ENCODE measurements at regions of chr7 and their contacts with region 1.

Region 1: DNA sequence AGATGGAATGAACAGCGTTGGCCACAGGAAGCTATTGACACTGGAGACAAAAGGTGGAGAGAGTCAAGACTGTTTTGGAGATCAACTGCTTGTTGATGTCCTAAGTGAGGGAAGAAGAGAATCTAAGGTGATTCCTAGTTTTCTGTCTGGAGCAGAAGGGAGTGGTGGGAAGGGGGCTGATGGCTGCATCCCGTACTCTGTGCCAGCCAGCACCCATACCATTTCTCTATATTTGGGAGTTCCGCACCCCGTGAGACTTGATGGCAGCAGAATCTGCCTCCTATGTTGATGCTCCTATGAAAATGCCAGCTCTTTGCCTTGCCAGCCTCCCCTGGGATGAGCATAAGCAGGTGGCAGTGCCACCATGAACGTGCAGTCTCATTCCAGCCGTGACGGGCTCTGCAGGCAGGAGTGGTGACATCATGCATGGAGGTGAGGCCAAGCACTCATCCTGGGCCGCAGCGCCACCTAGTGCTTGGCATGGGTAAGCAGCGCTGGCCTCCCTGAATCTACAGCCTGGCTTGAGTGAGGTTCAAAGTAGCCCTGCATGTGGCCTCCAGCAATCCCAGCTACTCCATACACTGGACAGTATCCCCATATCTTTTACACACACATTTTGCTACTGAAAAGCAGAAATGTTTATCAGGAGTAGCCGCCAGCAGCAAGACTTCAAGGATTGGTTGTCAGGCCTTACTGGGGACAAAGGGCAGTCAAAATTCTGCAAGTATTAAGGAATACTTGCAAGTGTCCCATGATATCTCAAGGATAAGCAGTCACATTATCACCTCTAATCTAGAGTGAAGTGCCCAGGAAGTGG is 43.0 kb downstream of the PODXL start:
- DNase-seq: peak; percentile 63 to 86 (median 69)
- ATAC-seq: peak; percentile 99
- H3K4me3 ChIP-seq: no peak overlapping the region
- H3K4me3 Mint-ChIP-seq: peak overlapping the region; percentile 26
- H3K27ac ChIP-seq: no peak overlapping the region
- H3K27ac Mint-ChIP-seq: no peak overlapping the region
- H3K4me1 ChIP-seq: peaks cover 17% of the 10 kb centered on the region
- H3K4me1 Mint-ChIP-seq: peaks cover 21% of the 10 kb centered on the region
- H3K27me3 ChIP-seq: no peaks in the 10 kb centered on the region
- H3K27me3 Mint-ChIP-seq: peaks cover 23% of the 10 kb centered on the region
- CTCF ChIP-seq: peak; percentile 89

Region 2: GRCh38 chr7:130875265-130875741 is 638.1 kb before region 1 on chr7:
- CTCF ChIA-PET with region 1: no interaction called
- POLR2A ChIA-PET with region 1: no interaction called
- intact Hi-C with region 1: loop called in 1 of 2 experiments (anchors 5 kb)
- DNase-seq: peak in 13 of 14 experiments; percentile 22 to 69 (median 41)
- ATAC-seq: peak; percentile 84
- H3K4me3 ChIP-seq: no peak overlapping the region
- H3K4me3 Mint-ChIP-seq: no peak overlapping the region
- H3K27ac ChIP-seq: no peak overlapping the region
- H3K27ac Mint-ChIP-seq: no peak overlapping the region
- H3K4me1 ChIP-seq: no peaks in the 10 kb centered on the region
- H3K4me1 Mint-ChIP-seq: peaks cover 29% of the 10 kb centered on the region
- H3K27me3 ChIP-seq: no peaks in the 10 kb centered on the region
- H3K27me3 Mint-ChIP-seq: no peaks in the 10 kb centered on the region
- CTCF ChIP-seq: peak; percentile 68

Region 3: DNA sequence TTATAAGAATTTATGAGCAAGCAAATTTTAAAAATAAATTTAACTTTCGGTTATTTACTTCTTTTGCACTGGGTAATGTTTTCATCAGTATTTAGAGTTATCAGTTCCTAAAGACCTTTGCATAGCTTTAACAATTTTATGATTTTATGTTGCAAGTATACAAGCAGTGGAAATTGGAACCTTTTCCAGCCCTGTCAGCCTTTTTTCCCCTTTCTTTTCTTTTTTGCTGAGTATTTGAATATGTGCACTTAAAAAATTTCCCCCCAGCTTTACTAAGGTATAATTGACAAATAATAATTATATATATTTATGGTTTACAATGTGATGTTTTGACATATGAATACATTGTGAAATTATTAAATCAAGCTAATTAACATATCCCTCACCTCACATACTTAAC is 123.2 kb before region 1 on chr7:
- CTCF ChIA-PET with region 1: no interaction called
- POLR2A ChIA-PET with region 1: no interaction called
- intact Hi-C with region 1: no loop called
- DNase-seq: no peak
- ATAC-seq: no peak
- H3K4me3 ChIP-seq: no peak overlapping the region
- H3K4me3 Mint-ChIP-seq: no peak overlapping the region
- H3K27ac ChIP-seq: no peak overlapping the region
- H3K27ac Mint-ChIP-seq: no peak overlapping the region
- H3K4me1 ChIP-seq: no peaks in the 10 kb centered on the region
- H3K4me1 Mint-ChIP-seq: peaks cover 21% of the 10 kb centered on the region
- H3K27me3 ChIP-seq: no peaks in the 10 kb centered on the region
- H3K27me3 Mint-ChIP-seq: no peaks in the 10 kb centered on the region
- CTCF ChIP-seq: no peak

Region 4: DNA sequence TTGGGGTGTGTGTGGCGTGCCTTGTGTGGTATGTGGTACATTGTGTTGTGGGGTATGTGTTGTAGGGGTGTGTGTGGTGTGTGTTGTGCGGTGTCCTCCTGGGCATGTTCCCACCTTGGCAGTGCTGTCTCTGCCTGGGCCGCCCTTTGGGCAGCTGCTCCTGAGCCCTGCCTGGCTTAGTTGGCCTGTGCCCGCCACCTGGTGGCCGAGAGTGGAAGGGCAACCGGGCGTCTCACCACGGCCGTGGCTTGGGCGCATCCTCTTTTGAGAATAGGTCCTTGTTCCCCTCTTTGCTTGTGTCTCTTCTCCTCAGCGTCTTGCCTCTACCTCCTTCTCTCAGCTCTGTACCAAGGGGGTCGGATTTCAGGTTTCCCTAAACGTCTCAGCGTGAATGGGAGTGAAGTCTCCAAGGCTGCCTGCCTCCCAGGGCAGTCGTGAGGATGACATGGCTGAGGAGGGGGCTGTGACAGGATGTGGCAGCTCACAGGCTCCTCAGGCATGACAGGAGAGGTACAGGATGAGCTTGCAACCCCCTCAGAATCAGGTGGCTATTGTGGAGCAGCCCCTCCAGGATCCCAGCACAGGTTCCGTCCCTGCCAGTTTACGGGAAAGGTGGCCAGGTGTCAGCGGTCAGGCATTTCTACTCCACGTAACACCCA is 141.3 kb after region 1 on chr7:
- CTCF ChIA-PET with region 1: no interaction called
- POLR2A ChIA-PET with region 1: no interaction called
- intact Hi-C with region 1: loop called (anchors 1 to 2 kb)
- DNase-seq: peak; percentile 59 to 85 (median 76)
- ATAC-seq: peak; percentile 80
- H3K4me3 ChIP-seq: no peak overlapping the region
- H3K4me3 Mint-ChIP-seq: no peak overlapping the region
- H3K27ac ChIP-seq: no peak overlapping the region
- H3K27ac Mint-ChIP-seq: no peak overlapping the region
- H3K4me1 ChIP-seq: peaks cover 3% of the 10 kb centered on the region
- H3K4me1 Mint-ChIP-seq: no peaks in the 10 kb centered on the region
- H3K27me3 ChIP-seq: no peaks in the 10 kb centered on the region
- H3K27me3 Mint-ChIP-seq: peaks cover 7% of the 10 kb centered on the region
- CTCF ChIP-seq: peak; percentile 83

Measured in CD4-positive, alpha-beta T cell (primary cell).